ENCODE measurements at regions of chr9 and their contacts with region 1.

Region 1: GRCh38 chr9:26744191-26744965 is 148.2 kb downstream of the CAAP1 start:
- DNase-seq: peak in 1 of 4 experiments; percentile 7
- ATAC-seq: no peak
- H3K4me3 ChIP-seq: no peak overlapping the region
- H3K27ac ChIP-seq: no peak overlapping the region
- H3K4me1 ChIP-seq: no peaks in the 10 kb centered on the region; a peak in 1 of 5 replicates
- H3K27me3 ChIP-seq: no peaks in the 10 kb centered on the region
- CTCF ChIP-seq: peak in 2 of 3 experiments; percentile 4 to 49; a peak in 3 of 6 replicates
- EP300 ChIP-seq: no peak
- POLR2A ChIP-seq: no peak
- RAD21 ChIP-seq: peak; percentile 44 to 54; a peak in 3 of 4 replicates

Region 2: GRCh38 chr9:26856413-26857032 is 112.1 kb after region 1 on chr9:
- CTCF ChIA-PET with region 1: interaction called, 11 read pairs
- POLR2A ChIA-PET with region 1: no interaction called
- in situ Hi-C with region 1: loop called (anchors 10 kb)
- intact Hi-C with region 1: loop called (anchors 5 kb)
- DNase-seq: peak; percentile 7 to 44 (median 16)
- ATAC-seq: peak; percentile 59; the same call in 2 of the 3 replicates
- H3K4me3 ChIP-seq: no peak overlapping the region
- H3K27ac ChIP-seq: no peak overlapping the region
- H3K4me1 ChIP-seq: no peaks in the 10 kb centered on the region
- H3K27me3 ChIP-seq: no peaks in the 10 kb centered on the region
- CTCF ChIP-seq: peak in 2 of 3 experiments; percentile 33 to 52; a peak in 2 of 6 replicates
- EP300 ChIP-seq: no peak
- POLR2A ChIP-seq: no peak
- RAD21 ChIP-seq: peak; percentile 31 to 64

Region 3: DNA sequence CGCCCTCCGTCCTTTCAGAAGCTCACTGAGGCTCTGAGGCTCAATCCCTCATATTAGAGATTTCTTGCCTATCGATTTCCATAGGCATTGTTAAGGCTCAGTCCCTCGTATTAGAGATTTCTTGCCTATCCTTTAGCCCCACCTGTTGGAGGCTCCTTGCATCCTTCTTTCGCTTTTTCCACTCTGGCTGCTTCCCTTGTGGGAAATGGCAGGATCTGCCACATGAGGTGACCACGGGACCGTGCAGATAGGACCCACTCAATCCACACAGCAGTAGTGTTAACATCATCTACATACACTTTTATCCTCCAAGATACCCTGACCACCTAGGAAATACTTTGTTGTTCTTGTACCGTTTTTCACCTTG is 231.3 kb after region 1 on chr9:
- CTCF ChIA-PET with region 1: interaction called, 5 read pairs
- POLR2A ChIA-PET with region 1: no interaction called
- in situ Hi-C with region 1: loop called (anchors 10 kb)
- intact Hi-C with region 1: loop called (anchors 5 kb)
- DNase-seq: peak in 2 of 4 experiments; percentile 8 to 44
- ATAC-seq: peak; percentile 70
- H3K4me3 ChIP-seq: no peak overlapping the region
- H3K27ac ChIP-seq: no peak overlapping the region
- H3K4me1 ChIP-seq: no peaks in the 10 kb centered on the region
- H3K27me3 ChIP-seq: no peaks in the 10 kb centered on the region
- CTCF ChIP-seq: peak; percentile 42 to 53 (median 49); a peak in 4 of 6 replicates
- EP300 ChIP-seq: no peak
- POLR2A ChIP-seq: no peak
- RAD21 ChIP-seq: peak in 1 of 2 experiments; percentile 58; a peak in 2 of 4 replicates

Region 4: GRCh38 chr9:27468462-27469110 is 724.2 kb after region 1 on chr9:
- CTCF ChIA-PET with region 1: no interaction called
- POLR2A ChIA-PET with region 1: no interaction called
- in situ Hi-C with region 1: no loop called
- intact Hi-C with region 1: no loop called
- DNase-seq: no peak
- ATAC-seq: no peak
- H3K4me3 ChIP-seq: no peak overlapping the region
- H3K27ac ChIP-seq: no peak overlapping the region
- H3K4me1 ChIP-seq: peaks cover 6 to 13% of the 10 kb centered on the region in 2 experiments; a peak in 3 of 5 replicates
- H3K27me3 ChIP-seq: no peaks in the 10 kb centered on the region
- CTCF ChIP-seq: no peak
- EP300 ChIP-seq: no peak
- POLR2A ChIP-seq: no peak
- RAD21 ChIP-seq: no peak

Measured in K562 (cell line).